ENCODE measurements at regions of chr17 and their contacts with region 1.

Region 1: GRCh38 chr17:57395721-57396321 is 139.5 kb downstream of the MSI2 start:
- DNase-seq: no peak
- H3K4me3 Mint-ChIP-seq: no peak overlapping the region
- H3K27ac Mint-ChIP-seq: no peak overlapping the region
- H3K4me1 Mint-ChIP-seq: no peaks in the 10 kb centered on the region
- H3K27me3 Mint-ChIP-seq: no peaks in the 10 kb centered on the region
- CTCF ChIP-seq: no peak

Region 2: DNA sequence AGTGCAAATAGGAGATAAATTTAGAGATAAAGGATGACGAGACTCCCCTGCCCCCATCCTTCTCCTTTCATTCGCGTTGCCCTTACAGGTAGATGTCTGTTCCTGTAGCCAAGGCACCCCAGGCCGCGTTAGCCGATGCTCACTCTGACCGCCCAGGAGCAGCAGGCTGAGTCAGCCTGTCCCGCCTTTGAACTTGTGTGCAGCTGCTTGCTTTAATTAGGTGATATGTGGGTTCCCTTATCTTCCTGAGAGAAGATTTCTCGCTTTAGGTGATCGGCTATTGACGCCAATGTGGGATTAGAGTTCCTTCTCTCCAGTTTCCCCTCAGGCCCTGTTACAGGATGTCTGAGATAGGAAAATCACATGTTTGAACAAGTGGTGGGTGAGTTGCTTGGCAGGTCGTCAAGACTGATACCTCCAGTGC is 20.0 kb before region 1 on chr17:
- CTCF ChIA-PET with region 1: no interaction called
- POLR2A ChIA-PET with region 1: interaction called, 3 read pairs
- intact Hi-C with region 1: loop called (anchors 2 kb)
- DNase-seq: peak; percentile 86
- H3K4me3 Mint-ChIP-seq: no peak overlapping the region
- H3K27ac Mint-ChIP-seq: no peak overlapping the region
- H3K4me1 Mint-ChIP-seq: peaks cover 42% of the 10 kb centered on the region
- H3K27me3 Mint-ChIP-seq: no peaks in the 10 kb centered on the region
- CTCF ChIP-seq: no peak

Region 3: GRCh38 chr17:57584050-57584551 is 188.3 kb after region 1 on chr17:
- CTCF ChIA-PET with region 1: no interaction called
- POLR2A ChIA-PET with region 1: no interaction called
- intact Hi-C with region 1: no loop called
- DNase-seq: no peak
- H3K4me3 Mint-ChIP-seq: no peak overlapping the region
- H3K27ac Mint-ChIP-seq: no peak overlapping the region
- H3K4me1 Mint-ChIP-seq: peaks cover 16% of the 10 kb centered on the region
- H3K27me3 Mint-ChIP-seq: no peaks in the 10 kb centered on the region
- CTCF ChIP-seq: no peak